Naive thymus-derived CD8-positive, alpha-beta T cell (primary cell): ENCODE measurements at regions of chr1 and their contacts with region 1.

Region 1: DNA sequence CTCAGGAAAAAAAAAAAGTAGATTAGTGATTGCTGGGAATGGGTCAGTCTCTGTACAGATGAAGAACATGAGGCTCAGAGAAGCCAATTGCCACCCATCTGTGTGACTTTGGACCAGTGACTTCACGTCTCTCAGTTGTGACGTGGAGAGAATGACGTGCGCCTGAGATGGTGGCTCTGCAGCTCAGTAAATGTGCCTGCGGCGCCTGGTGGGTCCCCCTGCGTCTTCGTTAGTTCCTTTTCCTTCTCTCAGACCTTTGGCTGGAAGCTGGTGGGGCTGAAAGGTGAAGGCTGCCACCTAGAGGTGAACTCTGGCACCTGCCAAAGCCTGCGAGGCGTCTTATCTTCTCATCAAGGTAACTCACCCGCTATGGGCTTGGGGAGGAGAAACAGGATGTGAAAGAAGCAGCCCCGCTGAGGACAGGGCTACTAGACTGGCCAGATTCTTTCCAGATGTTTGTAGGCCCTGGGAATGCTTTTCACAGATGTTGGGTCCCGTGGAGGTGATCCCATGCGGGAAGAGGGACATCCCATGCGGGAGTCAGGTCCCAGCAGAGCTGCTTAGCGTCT is 8.7 kb upstream of the E2F2 start:
- DNase-seq: peak; percentile 73 to 94 (median 92)
- ATAC-seq: peak; percentile 95 to 96
- H3K4me3 Mint-ChIP-seq: peak overlapping the region; percentile 28 to 74 (median 49)
- H3K27ac Mint-ChIP-seq: peak overlapping the region in 9 of 10 donors; percentile 12 to 87 (median 74)
- H3K4me1 Mint-ChIP-seq: peaks cover 9 to 23% (median 14%) of the 10 kb centered on the region in 4 donors
- H3K27me3 Mint-ChIP-seq: no peaks in the 10 kb centered on the region

Region 2: DNA sequence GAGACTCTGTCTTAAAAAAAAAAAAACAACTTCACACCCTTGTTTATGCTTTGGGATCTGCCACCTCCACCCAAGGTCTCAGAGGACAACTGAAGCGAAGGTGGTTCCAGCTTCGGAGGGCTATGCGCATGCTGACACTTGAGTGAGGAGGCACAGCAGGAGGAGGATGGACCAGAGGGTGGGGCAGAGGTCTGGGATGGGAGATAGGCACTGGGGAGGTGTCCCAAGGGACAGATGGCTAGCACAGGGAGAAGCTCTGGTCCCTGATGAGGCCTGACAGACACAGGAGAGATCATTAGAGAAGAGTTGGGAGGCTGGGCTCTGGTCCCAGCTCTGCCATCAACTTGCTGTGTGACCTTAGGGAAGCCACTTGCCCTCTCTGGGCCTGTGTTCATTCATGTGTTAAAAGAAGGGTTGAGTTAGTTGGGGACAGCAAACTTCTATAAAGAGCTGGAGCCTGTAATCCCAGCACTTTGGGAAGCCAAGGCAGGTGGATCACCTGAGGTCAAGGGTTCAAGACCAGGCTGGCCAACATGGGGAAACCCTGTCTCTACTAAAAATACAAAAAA is 25.6 kb before region 1 on chr1:
- POLR2A ChIA-PET with region 1: no interaction called
- DNase-seq: no peak
- ATAC-seq: no peak
- H3K4me3 Mint-ChIP-seq: no peak overlapping the region
- H3K27ac Mint-ChIP-seq: peak overlapping the region in 1 of 10 donors; percentile 28
- H3K4me1 Mint-ChIP-seq: no peaks in the 10 kb centered on the region
- H3K27me3 Mint-ChIP-seq: no peaks in the 10 kb centered on the region

Region 3: DNA sequence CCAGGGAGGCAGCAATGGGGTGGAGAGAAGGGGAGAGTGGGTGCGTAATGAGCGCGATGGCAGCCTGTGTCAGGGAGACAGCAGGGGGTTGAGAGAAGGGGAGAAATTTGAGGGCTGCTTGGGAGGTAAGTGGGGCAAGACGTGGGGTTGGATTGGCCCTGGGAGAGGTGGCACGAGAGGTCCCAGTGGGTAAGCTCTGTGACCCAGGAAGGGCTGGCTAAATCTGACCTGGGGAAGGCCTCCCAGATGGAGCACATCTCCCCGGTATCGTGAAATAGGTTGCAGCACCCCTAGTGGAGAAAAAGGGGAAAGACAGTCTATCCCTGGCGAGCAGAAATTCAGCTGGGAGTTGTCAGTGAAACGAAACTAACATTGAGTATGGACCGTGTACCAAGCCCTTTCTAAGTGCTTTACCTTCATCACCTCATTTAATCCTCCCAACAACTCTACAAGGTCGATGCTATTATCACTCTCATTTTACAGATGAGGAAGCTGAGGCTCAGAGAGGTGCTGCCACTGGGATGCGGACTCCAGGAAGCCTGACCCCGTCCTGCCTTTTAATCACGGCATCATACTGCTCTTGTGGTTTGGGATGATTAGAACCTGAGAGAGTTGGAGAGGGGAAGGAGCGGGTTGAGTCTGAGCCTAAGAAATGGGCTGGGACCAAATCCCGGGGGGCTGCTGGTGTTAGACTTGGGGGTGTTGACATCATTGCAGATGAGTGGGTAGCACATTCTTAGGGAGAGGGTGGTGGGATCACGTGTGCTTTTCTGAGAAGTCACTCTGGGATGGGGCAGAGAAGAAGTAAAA is 95.3 kb after region 1 on chr1:
- POLR2A ChIA-PET with region 1: interaction called, 612 read pairs
- DNase-seq: peak in 9 of 10 donors; percentile 52 to 77 (median 67)
- ATAC-seq: peak; percentile 83 to 84
- H3K4me3 Mint-ChIP-seq: peak overlapping the region; percentile 52 to 80 (median 74)
- H3K27ac Mint-ChIP-seq: peak overlapping the region; percentile 89 to 98 (median 93)
- H3K4me1 Mint-ChIP-seq: peaks cover 20 to 51% (median 41%) of the 10 kb centered on the region in 4 donors
- H3K27me3 Mint-ChIP-seq: no peaks in the 10 kb centered on the region